HepG2 (cell line): ENCODE measurements at regions of chr11 and their contacts with region 1.

Region 1: GRCh38 chr11:64996710-64997380 is at the start of gene BATF2:
- DNase-seq: peak; percentile 94
- ATAC-seq: peak; percentile 85
- H3K4me3 ChIP-seq: peak within 1 kb of the TSS; percentile 53 to 81 (median 60)
- H3K27ac ChIP-seq: peak within 1 kb of the TSS; percentile 56
- H3K4me1 ChIP-seq: peaks cover 58% of the 10 kb centered on the region
- H3K27me3 ChIP-seq: no peaks in the 10 kb centered on the region; a peak in 1 of 5 replicates
- CTCF ChIP-seq: peak; percentile 95
- EP300 ChIP-seq: peak in 1 of 2 experiments; percentile 63; a peak in 2 of 4 replicates
- POLR2A ChIP-seq: peak; percentile 71 to 84
- RAD21 ChIP-seq: peak; percentile 70
- total RNA-seq, gene BATF2: 3.9 and 4.2 TPM in 2 replicates

Region 2: GRCh38 chr11:64846998-64847666 is 149.7 kb before region 1 on chr11:
- CTCF ChIA-PET with region 1: no interaction called
- POLR2A ChIA-PET with region 1: interaction called, 4 read pairs
- in situ Hi-C with region 1: no loop called
- intact Hi-C with region 1: loop called (anchors 5 kb)
- DNase-seq: peak; percentile 87
- ATAC-seq: peak; percentile 68
- H3K4me3 ChIP-seq: peak overlapping the region in 1 of 3 experiments; percentile 47; a peak in 2 of 6 replicates
- H3K27ac ChIP-seq: no peak overlapping the region
- H3K4me1 ChIP-seq: peaks cover 77% of the 10 kb centered on the region
- H3K27me3 ChIP-seq: no peaks in the 10 kb centered on the region; a peak in 1 of 5 replicates
- CTCF ChIP-seq: peak; percentile 99
- EP300 ChIP-seq: no peak
- POLR2A ChIP-seq: no peak
- RAD21 ChIP-seq: peak; percentile 98

Region 3: GRCh38 chr11:64924102-64924851 is 72.6 kb before region 1 on chr11 and contains the start of gene PPP2R5B:
- CTCF ChIA-PET with region 1: no interaction called
- POLR2A ChIA-PET with region 1: interaction called, 9 read pairs
- in situ Hi-C with region 1: no loop called
- intact Hi-C with region 1: loop called (anchors 2 kb)
- DNase-seq: peak; percentile 85
- ATAC-seq: peak; percentile 94
- H3K4me3 ChIP-seq: peak within 1 kb of the TSS; percentile 58 to 80 (median 72)
- H3K27ac ChIP-seq: peak within 1 kb of the TSS; percentile 64
- H3K4me1 ChIP-seq: peaks cover 43% of the 10 kb centered on the region
- H3K27me3 ChIP-seq: no peaks in the 10 kb centered on the region; a peak in 1 of 5 replicates
- CTCF ChIP-seq: peak; percentile 4; the same call in 1 of the 2 replicates
- EP300 ChIP-seq: no peak; a peak in 1 of 4 replicates
- POLR2A ChIP-seq: 0 out of 4 replicates have a peak, but pooled peaks of 1 of the 2 experiments have one; percentile 28
- RAD21 ChIP-seq: no peak
- total RNA-seq, gene PPP2R5B: 1.6 and 2.3 TPM in 2 replicates

Region 4: DNA sequence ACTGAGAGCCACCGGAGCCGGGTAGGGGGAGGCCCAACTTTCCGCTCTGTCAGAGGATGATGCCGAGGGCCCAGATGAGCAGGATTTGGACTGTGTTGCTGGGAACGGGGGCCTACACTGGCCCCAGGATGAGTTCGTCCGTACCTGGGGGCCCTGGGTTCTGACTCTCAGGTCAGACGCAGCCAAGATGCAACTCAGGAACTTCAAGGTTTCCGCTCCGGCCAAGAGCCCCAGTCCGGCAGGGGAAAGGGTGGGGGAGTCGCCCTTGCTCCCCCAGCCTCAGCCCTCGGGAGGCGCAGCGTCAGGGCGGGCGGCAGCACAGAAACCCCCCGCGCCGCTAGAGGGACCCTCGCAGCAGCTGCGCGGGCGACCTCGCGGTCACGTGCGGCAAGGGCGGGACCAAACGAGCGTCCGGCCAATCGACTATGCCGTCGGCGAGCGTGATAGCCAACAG is 16.9 kb after region 1 on chr11:
- CTCF ChIA-PET with region 1: interaction called, 3 read pairs
- POLR2A ChIA-PET with region 1: interaction called, 42 read pairs
- in situ Hi-C with region 1: no loop called
- intact Hi-C with region 1: no loop called
- DNase-seq: no peak
- ATAC-seq: peak; percentile 88
- H3K4me3 ChIP-seq: peak overlapping the region; percentile 77 to 81 (median 80); a peak in 5 of 6 replicates
- H3K27ac ChIP-seq: peak overlapping the region; percentile 72
- H3K4me1 ChIP-seq: peaks cover 34% of the 10 kb centered on the region
- H3K27me3 ChIP-seq: no peaks in the 10 kb centered on the region
- CTCF ChIP-seq: peak; percentile 69
- EP300 ChIP-seq: 0 out of 4 replicates have a peak, but pooled peaks of 1 of the 2 experiments have one; percentile 17
- POLR2A ChIP-seq: no peak
- RAD21 ChIP-seq: peak; percentile 83

Region 5: DNA sequence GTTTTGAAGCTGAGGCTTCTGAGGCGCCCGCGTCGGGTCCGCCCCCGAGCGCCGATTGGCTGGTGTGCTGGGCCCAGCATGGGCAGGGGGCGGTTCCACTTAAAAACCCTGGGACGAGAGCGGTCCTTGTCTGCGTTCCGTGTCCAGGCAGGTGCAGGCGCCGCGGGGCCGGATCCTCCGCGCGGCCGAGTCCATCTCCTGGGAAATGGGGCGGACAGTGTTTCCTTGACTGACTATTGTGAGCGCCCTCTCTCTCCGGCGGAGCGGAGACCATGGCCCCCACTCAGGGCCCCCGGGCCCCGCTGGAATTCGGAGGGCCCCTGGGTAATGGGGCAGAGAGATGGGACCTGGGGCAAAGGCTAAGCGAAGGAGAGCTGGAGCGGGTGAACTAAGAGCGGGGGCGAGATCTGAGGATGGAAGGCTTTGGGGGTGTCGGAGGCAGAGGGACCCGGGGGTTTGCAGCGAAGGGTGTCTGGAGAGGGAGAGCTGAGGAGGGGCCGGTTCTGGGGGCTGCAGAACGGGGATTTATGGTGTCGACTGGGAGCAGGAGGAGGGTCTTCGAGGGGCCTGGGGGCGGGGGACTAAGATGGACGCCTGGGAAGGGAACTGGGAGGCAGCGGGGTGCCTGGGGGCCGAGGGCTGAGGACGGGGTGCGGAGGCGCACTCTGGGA is 115.0 kb after region 1 on chr11 and contains the start of gene TM7SF2:
- CTCF ChIA-PET with region 1: no interaction called
- POLR2A ChIA-PET with region 1: interaction called, 16 read pairs
- in situ Hi-C with region 1: no loop called
- intact Hi-C with region 1: no loop called
- DNase-seq: peak; percentile 93
- ATAC-seq: peak; percentile 79
- H3K4me3 ChIP-seq: peak within 1 kb of the TSS; percentile 65 to 98 (median 95)
- H3K27ac ChIP-seq: peak within 1 kb of the TSS; percentile 61
- H3K4me1 ChIP-seq: peaks cover 36% of the 10 kb centered on the region
- H3K27me3 ChIP-seq: no peaks in the 10 kb centered on the region
- CTCF ChIP-seq: peak; percentile 11; the same call in 1 of the 2 replicates
- EP300 ChIP-seq: no peak
- POLR2A ChIP-seq: peak in 1 of 2 experiments; percentile 98; a peak in 2 of 4 replicates
- RAD21 ChIP-seq: no peak
- total RNA-seq, gene TM7SF2: 28.8 and 66.9 TPM in 2 replicates